ENCODE measurements at regions of chr14 and their contacts with region 1.

Region 1: GRCh38 chr14:29521526-29522137 is 406.0 kb downstream of the PRKD1 start:
- DNase-seq: peak; percentile 37
- H3K4me3 Mint-ChIP-seq: no peak overlapping the region
- H3K27ac Mint-ChIP-seq: no peak overlapping the region
- H3K4me1 Mint-ChIP-seq: no peaks in the 10 kb centered on the region
- H3K27me3 Mint-ChIP-seq: peaks cover 44% of the 10 kb centered on the region
- CTCF ChIP-seq: peak; percentile 40

Region 2: DNA sequence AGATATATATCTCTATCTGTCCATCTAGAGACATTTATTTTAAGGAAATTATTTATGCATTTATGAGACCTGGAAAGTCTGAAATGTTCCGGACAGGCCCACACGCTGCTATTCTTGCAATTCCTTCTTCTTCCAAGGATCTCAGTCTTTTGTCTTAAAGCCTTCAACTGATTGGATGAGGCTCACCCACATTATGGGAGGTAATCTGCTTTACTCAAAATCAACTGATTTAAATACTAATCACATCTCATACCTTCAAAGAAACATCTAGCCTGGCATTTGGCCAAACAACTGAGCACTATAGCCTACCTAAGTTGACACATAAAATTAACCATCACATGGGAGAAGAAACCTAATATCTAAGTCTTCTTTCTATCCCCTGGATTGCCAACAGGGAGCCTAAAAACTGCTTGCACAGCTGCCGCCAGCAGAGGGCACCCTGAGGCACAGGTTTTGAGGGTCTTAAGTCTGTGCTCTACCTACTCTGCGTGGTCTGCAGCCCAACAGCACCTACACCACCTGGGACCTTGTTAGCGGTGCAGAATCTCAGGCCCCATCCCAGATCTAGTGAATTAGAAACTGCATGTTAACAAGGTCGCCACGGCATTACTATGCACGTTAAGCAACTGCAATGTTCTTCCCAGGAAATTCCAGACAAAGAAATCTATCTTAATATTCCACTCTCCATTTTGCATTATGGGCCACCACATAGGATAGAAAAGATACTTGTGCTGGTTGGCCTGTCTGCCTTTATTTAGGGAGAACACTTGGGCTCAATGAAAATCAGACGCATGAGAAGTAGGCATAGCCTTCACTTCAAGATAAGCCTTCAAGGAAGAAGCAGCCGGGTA is 505.4 kb before region 1 on chr14:
- CTCF ChIA-PET with region 1: no interaction called
- POLR2A ChIA-PET with region 1: no interaction called
- intact Hi-C with region 1: loop called (anchors 2 kb)
- DNase-seq: peak; percentile 31
- H3K4me3 Mint-ChIP-seq: no peak overlapping the region
- H3K27ac Mint-ChIP-seq: no peak overlapping the region
- H3K4me1 Mint-ChIP-seq: no peaks in the 10 kb centered on the region
- H3K27me3 Mint-ChIP-seq: peaks cover 73% of the 10 kb centered on the region
- CTCF ChIP-seq: peak; percentile 75

Measured in MCF 10A (cell line).